ENCODE measurements at regions of chr2 and their contacts with region 1.

Region 1: DNA sequence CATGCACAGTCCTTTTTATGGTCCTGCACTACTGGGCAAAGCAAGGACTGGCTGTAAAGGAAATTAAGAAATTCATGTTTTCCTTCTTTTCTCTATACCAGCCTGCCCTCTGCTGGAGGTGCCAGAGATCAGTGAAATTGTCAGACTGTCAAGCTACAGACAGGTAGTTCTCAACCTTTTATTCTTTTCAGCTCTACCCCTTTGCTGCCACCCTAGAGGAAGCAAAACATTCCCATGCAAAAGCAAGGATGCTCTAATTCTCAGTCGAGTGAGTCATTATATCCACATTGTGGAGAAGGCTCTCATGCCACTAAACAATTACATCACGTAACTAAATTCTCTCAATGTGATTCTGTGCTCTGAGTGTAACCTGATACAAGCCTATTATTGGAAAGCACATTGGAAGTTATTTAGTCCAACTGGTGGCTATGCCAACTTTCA is 25.0 kb upstream of the RAPGEF4 start:
- DNase-seq: peak in 1 of 2 experiments; percentile 52
- H3K4me3 ChIP-seq: no peak overlapping the region
- H3K27ac ChIP-seq: no peak overlapping the region
- H3K4me1 ChIP-seq: no peaks in the 10 kb centered on the region
- H3K27me3 ChIP-seq: no peaks in the 10 kb centered on the region
- CTCF ChIP-seq: peak in 2 of 3 experiments; percentile 67 to 74; a peak in 3 of 4 replicates
- EP300 ChIP-seq: no peak
- POLR2A ChIP-seq: no peak
- RAD21 ChIP-seq: peak; percentile 79 to 85

Region 2: DNA sequence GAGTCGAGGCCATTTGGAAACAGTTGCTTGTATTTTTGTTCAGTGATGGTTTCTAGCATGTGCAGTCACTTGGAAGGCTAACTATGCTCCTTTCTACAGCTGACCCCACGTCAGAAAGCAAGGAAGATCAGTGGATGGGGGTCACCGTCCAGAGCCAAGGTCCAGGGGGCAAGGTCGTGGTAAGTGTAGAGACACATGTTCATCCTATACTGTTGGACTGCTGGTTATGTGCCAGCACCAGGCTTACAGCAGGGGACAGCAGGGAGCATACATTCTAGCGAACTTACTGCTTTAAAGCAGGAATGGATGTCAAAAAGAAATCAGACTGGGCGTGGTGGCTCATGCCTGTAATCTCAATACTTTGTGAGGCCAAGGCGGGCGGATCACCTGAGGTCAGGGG is 243.2 kb before region 1 on chr2:
- CTCF ChIA-PET with region 1: no interaction called
- POLR2A ChIA-PET with region 1: no interaction called
- DNase-seq: no peak
- H3K4me3 ChIP-seq: no peak overlapping the region
- H3K27ac ChIP-seq: no peak overlapping the region
- H3K4me1 ChIP-seq: peaks cover under 1 to 8% (median 4%) of the 10 kb centered on the region in 4 experiments; a peak in 6 of 7 replicates
- H3K27me3 ChIP-seq: no peaks in the 10 kb centered on the region
- CTCF ChIP-seq: no peak
- EP300 ChIP-seq: no peak
- POLR2A ChIP-seq: no peak
- RAD21 ChIP-seq: no peak

Region 3: GRCh38 chr2:172588931-172589330 is 121.7 kb before region 1 on chr2:
- CTCF ChIA-PET with region 1: interaction called, 10 read pairs
- POLR2A ChIA-PET with region 1: no interaction called
- DNase-seq: no peak
- H3K4me3 ChIP-seq: no peak overlapping the region
- H3K27ac ChIP-seq: no peak overlapping the region
- H3K4me1 ChIP-seq: no peaks in the 10 kb centered on the region
- H3K27me3 ChIP-seq: no peaks in the 10 kb centered on the region
- CTCF ChIP-seq: no peak
- EP300 ChIP-seq: no peak
- POLR2A ChIP-seq: no peak
- RAD21 ChIP-seq: no peak

Region 4: GRCh38 chr2:172698041-172698863 is 12.4 kb before region 1 on chr2:
- CTCF ChIA-PET with region 1: interaction called, 13 read pairs
- POLR2A ChIA-PET with region 1: no interaction called
- DNase-seq: no peak
- H3K4me3 ChIP-seq: no peak overlapping the region
- H3K27ac ChIP-seq: no peak overlapping the region
- H3K4me1 ChIP-seq: no peaks in the 10 kb centered on the region
- H3K27me3 ChIP-seq: no peaks in the 10 kb centered on the region
- CTCF ChIP-seq: no peak
- EP300 ChIP-seq: no peak
- POLR2A ChIP-seq: no peak
- RAD21 ChIP-seq: no peak

Region 5: DNA sequence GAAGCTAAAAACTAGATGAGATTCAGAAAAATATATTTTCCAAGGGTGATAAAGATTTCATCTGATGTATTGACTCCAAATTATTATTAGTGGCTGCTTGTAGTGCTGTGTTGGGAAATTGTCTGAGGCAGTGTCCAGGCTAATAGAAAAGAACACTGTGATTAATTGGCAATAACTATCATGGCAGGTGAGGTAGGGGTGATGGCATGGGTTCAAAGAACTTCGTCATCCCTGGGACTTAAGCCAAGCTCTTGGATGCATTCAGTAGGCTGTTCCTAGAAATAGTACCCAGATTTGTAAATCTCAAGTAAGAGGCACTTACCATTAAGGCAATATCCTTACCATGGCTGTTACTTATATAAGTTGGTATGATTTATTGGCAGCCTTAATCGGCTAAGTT is 11.9 kb after region 1 on chr2:
- CTCF ChIA-PET with region 1: interaction called, 11 read pairs
- POLR2A ChIA-PET with region 1: no interaction called
- DNase-seq: no peak
- H3K4me3 ChIP-seq: no peak overlapping the region
- H3K27ac ChIP-seq: no peak overlapping the region
- H3K4me1 ChIP-seq: peaks cover 0 to 3% (median 0%) of the 10 kb centered on the region in 4 experiments; a peak in 2 of 7 replicates
- H3K27me3 ChIP-seq: no peaks in the 10 kb centered on the region
- CTCF ChIP-seq: no peak
- EP300 ChIP-seq: no peak
- POLR2A ChIP-seq: no peak
- RAD21 ChIP-seq: no peak